ENCODE measurements at regions of chrX and their contacts with region 1.

Region 1: DNA sequence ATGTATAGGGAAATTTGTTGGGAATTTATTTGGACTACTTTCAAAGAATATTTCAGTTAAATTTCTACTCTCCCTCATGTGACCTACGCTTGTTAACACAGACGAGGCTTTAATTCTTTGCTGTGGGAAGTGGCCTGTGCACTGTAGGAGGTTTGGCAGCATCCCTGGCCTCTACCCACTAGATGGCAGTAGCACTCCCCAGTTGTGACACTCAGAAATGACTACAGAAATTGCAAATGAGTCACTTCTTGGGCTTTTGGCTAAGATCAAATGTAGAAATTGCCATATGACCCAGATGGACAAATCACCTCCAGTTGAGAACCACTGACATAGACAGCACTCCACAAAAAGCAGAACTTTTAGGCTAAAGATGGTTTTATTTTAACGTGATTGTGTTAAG is 22.1 kb downstream of the PIR start:
- DNase-seq: peak; percentile 80
- H3K4me3 Mint-ChIP-seq: no peak overlapping the region
- H3K27ac Mint-ChIP-seq: no peak overlapping the region
- H3K4me1 Mint-ChIP-seq: peaks cover 22% of the 10 kb centered on the region
- H3K27me3 Mint-ChIP-seq: peaks cover under 1% of the 10 kb centered on the region
- CTCF ChIP-seq: peak; percentile 76

Region 2: GRCh38 chrX:15299941-15300851 is 170.8 kb before region 1 on chrX:
- CTCF ChIA-PET with region 1: interaction called, 37 read pairs
- POLR2A ChIA-PET with region 1: no interaction called
- intact Hi-C with region 1: loop called (anchors 1 kb)
- DNase-seq: peak; percentile 33
- H3K4me3 Mint-ChIP-seq: no peak overlapping the region
- H3K27ac Mint-ChIP-seq: no peak overlapping the region
- H3K4me1 Mint-ChIP-seq: no peaks in the 10 kb centered on the region
- H3K27me3 Mint-ChIP-seq: peaks cover 20% of the 10 kb centered on the region
- CTCF ChIP-seq: peak; percentile 38

Region 3: GRCh38 chrX:15349046-15349445 is 122.0 kb before region 1 on chrX:
- CTCF ChIA-PET with region 1: interaction called, 353 read pairs
- POLR2A ChIA-PET with region 1: interaction called, 8 read pairs
- intact Hi-C with region 1: loop called (anchors 1 kb)
- DNase-seq: peak; percentile 75
- H3K4me3 Mint-ChIP-seq: no peak overlapping the region
- H3K27ac Mint-ChIP-seq: no peak overlapping the region
- H3K4me1 Mint-ChIP-seq: no peaks in the 10 kb centered on the region
- H3K27me3 Mint-ChIP-seq: peaks cover 53% of the 10 kb centered on the region
- CTCF ChIP-seq: peak; percentile 56

Region 4: DNA sequence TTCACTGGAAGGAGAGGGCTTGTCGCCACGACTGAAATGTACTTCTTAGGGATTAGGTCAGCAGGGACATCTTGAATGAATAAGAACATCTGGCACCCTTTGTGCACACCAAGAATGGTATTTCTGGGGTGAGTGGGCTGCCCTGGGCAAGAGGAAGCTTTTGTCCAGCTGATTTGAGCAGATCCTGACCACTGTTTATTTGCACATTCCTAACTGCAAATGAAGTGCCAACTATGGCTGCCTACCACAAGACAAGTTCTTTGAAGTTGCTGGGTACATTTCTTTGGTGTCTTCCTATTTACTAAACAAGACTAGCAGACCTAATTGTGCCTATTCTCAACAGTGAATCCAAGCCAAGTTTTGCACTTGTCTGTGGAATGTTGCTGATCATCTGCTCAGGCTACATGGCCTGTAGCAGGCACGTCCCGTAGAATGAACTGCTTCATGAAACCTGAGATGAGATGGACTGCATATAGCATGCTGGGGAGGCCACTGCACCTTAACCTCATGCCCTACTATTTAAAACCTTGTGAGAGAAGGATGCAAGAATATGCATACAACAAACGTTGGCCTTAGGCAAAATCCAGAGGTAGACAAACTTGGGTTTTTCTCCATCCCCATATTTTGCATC is 22.9 kb before region 1 on chrX:
- CTCF ChIA-PET with region 1: interaction called, 27 read pairs
- POLR2A ChIA-PET with region 1: interaction called, 6 read pairs
- intact Hi-C with region 1: no loop called
- DNase-seq: no peak
- H3K4me3 Mint-ChIP-seq: no peak overlapping the region
- H3K27ac Mint-ChIP-seq: no peak overlapping the region
- H3K4me1 Mint-ChIP-seq: no peaks in the 10 kb centered on the region
- H3K27me3 Mint-ChIP-seq: peaks cover 12% of the 10 kb centered on the region
- CTCF ChIP-seq: no peak

Region 5: DNA sequence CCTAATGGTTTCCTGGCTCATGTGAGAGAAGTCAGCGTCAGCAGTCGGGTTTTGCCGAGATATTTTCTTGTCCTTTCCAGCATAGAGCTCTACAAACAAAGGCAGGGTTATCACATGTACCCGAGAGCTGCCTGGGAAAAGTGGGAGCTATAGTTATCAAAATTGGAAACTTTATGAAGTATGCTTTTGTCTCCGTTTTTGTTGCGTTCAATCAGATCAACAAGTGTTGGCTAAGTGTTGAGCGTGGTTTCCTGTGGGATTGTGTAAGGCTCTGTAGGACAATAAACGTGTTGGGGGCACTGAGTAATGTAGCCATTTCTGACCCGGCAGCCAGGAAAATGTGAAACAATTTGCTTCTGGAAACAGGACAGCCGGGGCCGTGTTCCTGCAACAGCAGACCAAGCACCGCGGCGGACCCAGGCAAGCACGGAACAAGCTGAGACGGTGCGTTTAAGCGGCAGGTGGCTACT is 29.5 kb after region 1 on chrX and contains the start of gene BMX:
- CTCF ChIA-PET with region 1: interaction called, 127 read pairs
- POLR2A ChIA-PET with region 1: interaction called, 9 read pairs
- intact Hi-C with region 1: loop called (anchors 1 kb)
- DNase-seq: no peak
- H3K4me3 Mint-ChIP-seq: no peak within 1 kb of the TSS
- H3K27ac Mint-ChIP-seq: no peak within 1 kb of the TSS
- H3K4me1 Mint-ChIP-seq: peaks cover 8% of the 10 kb centered on the region
- H3K27me3 Mint-ChIP-seq: peaks cover 26% of the 10 kb centered on the region
- CTCF ChIP-seq: no peak
- total RNA-seq, gene BMX: not detected in 2 replicates

Region 6: DNA sequence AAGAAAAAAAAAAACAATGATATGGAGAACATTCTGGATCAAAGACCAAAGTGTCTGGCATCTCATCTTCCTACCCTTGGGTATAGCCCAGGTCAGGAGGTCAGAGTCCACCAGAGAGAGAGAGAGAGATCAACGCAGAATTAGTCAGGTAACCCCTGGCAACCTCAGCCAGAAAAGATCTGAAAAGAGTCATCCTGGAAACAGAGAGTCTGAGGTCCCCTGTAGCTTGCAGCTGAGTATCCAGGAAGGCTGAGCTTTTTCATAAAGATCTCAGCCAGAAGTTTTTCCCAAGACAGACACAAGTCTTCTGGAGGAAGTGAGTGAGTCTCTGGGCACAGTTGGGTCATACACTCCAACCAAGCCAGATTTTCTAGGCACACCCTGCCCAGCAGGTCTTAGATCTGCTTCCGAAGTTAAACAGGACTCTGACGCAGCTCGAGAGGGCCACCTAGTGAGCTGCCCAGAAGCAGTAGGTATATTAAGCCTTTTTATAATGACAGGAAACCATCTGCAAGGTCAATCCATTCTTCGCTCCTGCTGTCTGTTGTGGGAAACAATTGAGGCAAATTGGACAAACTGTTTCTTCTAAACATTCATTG is 94.1 kb after region 1 on chrX:
- CTCF ChIA-PET with region 1: interaction called, 69 read pairs
- POLR2A ChIA-PET with region 1: interaction called, 6 read pairs
- intact Hi-C with region 1: loop called (anchors 1 kb)
- DNase-seq: peak; percentile 83
- H3K4me3 Mint-ChIP-seq: no peak overlapping the region
- H3K27ac Mint-ChIP-seq: no peak overlapping the region
- H3K4me1 Mint-ChIP-seq: no peaks in the 10 kb centered on the region
- H3K27me3 Mint-ChIP-seq: peaks cover 69% of the 10 kb centered on the region
- CTCF ChIP-seq: peak; percentile 84

Region 7: DNA sequence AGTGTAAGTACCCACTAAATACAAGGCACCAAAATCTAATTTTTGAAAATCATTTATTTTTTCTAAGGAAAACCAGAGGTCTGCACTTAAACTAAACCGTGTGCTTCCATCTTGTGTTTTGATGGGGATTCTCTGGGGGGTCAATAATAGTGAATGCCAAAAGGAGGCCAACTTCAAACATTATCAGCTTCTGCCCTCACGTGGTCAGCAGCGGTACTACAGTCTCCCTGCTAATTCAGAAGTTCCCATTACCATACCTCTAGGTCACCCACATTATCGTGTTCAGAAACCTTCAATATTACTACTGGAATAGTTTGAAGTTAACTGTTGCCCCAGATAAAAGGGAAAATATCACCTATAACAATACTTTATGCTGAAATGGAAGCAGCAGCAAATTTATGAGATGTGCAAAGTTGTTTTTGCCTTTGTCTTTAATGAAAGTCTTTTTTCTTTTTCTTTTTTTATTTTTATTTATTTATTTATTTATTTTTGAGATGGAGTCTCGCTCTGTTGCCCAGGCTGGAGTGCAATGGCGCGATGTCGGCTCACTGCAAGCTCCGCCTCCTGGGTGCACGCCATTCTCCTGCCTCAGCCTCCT is 1224.2 kb after region 1 on chrX:
- CTCF ChIA-PET with region 1: no interaction called
- POLR2A ChIA-PET with region 1: no interaction called
- intact Hi-C with region 1: loop called (anchors 10 kb)
- DNase-seq: peak; percentile 68
- H3K4me3 Mint-ChIP-seq: no peak overlapping the region
- H3K27ac Mint-ChIP-seq: no peak overlapping the region
- H3K4me1 Mint-ChIP-seq: no peaks in the 10 kb centered on the region
- H3K27me3 Mint-ChIP-seq: peaks cover 47% of the 10 kb centered on the region
- CTCF ChIP-seq: peak; percentile 80